ENCODE measurements at regions of chr11 and their contacts with region 1.

Region 1: DNA sequence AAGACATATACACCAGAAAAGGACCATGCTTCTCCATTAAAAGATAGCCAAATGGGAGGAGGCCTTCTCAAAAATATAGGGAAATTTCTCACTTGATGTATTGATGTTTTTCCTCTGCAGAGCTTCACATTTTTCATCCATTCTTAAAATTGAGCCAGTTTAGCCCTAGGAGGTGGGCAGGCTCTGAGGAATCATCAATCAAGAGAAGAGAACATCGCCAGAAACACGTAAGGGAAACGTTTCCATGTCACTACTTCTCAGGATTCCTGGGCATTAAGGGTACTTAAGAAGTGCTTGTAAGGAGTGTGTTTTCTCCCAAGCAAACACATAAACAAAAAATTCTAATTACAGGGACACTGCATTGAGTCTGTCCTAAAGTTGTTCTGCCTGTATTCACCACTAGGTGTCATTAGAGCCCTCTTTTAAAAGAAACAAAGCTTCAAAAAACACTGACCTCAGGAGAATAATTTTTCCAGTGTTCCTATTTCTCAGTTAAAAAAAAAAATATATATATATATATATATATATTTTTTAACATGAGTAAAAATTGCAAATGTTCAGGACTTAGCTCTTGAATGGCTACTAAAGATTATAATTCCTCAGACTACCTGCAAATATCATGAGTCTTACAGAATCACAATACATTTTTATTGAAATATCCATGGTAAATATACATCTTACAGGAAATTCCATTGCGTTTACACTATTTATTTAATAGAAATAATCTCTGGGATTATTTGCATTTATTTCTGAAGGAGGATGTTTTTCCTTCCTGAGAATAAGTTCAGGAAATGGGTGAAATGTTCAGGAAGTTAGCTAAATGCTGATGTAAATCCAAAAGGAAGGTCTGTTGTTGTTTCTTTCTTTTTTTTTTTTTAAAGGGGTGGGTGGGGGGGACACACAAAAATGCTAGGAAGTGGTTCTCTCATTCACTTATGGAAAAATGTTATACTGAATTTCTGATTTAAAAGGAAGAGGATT is 16.0 kb downstream of the FZD4 start:
- DNase-seq: no peak
- H3K4me3 ChIP-seq: no peak overlapping the region
- H3K27ac ChIP-seq: peak overlapping the region; percentile 81
- H3K4me1 ChIP-seq: peaks cover 54% of the 10 kb centered on the region
- H3K27me3 ChIP-seq: no peaks in the 10 kb centered on the region
- CTCF ChIP-seq: peak; percentile 50 to 67 (median 52)
- POLR2A ChIP-seq: no peak

Region 2: GRCh38 chr11:87281496-87281895 is 342.3 kb after region 1 on chr11:
- intact Hi-C with region 1: loop called (anchors 2 kb)
- DNase-seq: no peak
- H3K4me3 ChIP-seq: no peak overlapping the region
- H3K27ac ChIP-seq: no peak overlapping the region
- H3K4me1 ChIP-seq: peaks cover 11% of the 10 kb centered on the region
- H3K27me3 ChIP-seq: no peaks in the 10 kb centered on the region
- CTCF ChIP-seq: peak in 1 of 3 experiments; percentile 16
- POLR2A ChIP-seq: no peak

Region 3: DNA sequence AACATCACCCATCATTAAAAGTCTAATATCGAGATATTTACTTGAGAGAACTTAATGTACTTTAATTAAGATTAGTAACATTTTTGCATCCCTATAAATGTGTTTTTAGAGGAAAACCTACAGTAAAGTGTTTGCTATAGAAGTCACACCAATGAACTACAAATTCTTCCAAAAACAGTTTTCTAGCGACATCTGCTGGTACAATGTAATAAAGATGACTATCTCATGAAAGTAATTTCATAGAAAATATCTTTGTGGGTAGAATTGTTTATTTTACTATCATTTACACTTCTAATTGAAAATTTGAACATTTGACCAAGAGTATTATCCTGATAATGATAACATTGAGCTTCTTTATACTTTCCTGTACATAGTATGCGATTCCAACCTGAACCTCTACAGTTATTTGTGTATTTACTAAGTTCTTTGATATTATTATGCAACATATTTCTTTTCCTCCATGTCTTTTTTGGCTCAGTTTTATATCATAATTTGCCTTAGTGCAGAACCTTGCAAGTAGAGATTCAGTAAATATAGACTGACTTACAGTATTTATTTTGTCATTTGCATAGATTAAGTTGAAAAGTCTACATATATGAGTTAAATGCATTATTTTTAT is 351.2 kb after region 1 on chr11:
- intact Hi-C with region 1: loop called (anchors 5 kb)
- DNase-seq: no peak
- H3K4me3 ChIP-seq: no peak overlapping the region
- H3K27ac ChIP-seq: no peak overlapping the region
- H3K4me1 ChIP-seq: no peaks in the 10 kb centered on the region
- H3K27me3 ChIP-seq: no peaks in the 10 kb centered on the region
- CTCF ChIP-seq: peak in 2 of 3 experiments; percentile 59 to 61
- POLR2A ChIP-seq: no peak

Region 4: DNA sequence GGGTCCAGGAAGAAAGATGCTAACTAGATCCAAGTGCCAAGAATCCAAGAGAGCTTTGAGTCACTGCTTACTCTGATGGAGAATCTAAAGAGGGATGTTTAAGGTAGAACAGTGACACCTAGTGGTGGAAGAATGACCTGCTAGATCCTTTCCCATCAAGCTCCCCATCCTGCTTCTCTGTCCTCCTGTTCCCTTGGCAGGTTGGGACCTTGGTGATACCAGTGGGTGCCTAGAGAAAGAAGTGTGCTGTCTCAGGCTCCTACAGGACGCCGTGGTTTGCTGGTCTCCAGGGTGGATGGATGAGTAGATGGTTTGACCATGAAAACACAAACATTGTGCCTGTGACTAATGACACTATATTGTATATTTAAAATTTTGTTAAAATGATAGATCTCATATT is 482.2 kb after region 1 on chr11:
- intact Hi-C with region 1: loop called (anchors 5 kb)
- DNase-seq: no peak
- H3K4me3 ChIP-seq: no peak overlapping the region
- H3K27ac ChIP-seq: no peak overlapping the region
- H3K4me1 ChIP-seq: no peaks in the 10 kb centered on the region
- H3K27me3 ChIP-seq: no peaks in the 10 kb centered on the region
- CTCF ChIP-seq: peak; percentile 61 to 79 (median 69)
- POLR2A ChIP-seq: no peak

Region 5: DNA sequence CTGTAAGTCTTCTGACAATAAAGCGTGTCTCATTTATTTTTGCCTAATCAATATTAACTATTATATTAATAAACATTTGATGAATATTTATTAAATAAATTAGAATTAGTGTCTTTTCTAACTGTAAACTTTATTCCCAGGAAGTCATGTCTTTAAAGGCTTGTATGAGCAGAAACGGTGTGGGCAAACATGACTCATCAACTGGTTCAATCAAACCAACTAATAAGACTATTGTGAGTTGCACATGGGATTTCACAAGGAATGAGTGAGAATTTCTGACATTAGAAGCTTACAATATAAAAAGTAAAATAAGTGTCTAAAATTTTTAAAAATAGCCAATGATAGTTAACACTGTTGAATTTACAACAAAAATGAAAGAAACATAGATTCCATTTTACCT is 1657.6 kb after region 1 on chr11:
- intact Hi-C with region 1: no loop called
- DNase-seq: no peak
- H3K4me3 ChIP-seq: no peak overlapping the region
- H3K27ac ChIP-seq: no peak overlapping the region
- H3K4me1 ChIP-seq: no peaks in the 10 kb centered on the region
- H3K27me3 ChIP-seq: no peaks in the 10 kb centered on the region
- CTCF ChIP-seq: no peak
- POLR2A ChIP-seq: no peak